Activated CD4-positive, alpha-beta memory T cell treated with anti-CD3 and anti-CD28 coated beads for 36 hours (primary cell): ENCODE measurements at regions of chr11 and their contacts with region 1.

Region 1: GRCh38 chr11:25876456-25876965 is 455.4 kb upstream of the ANO3 start:
- DNase-seq: no peak
- H3K4me3 Mint-ChIP-seq: no peak overlapping the region
- H3K27ac Mint-ChIP-seq: no peak overlapping the region
- H3K4me1 Mint-ChIP-seq: no peaks in the 10 kb centered on the region
- H3K27me3 Mint-ChIP-seq: no peaks in the 10 kb centered on the region

Region 2: DNA sequence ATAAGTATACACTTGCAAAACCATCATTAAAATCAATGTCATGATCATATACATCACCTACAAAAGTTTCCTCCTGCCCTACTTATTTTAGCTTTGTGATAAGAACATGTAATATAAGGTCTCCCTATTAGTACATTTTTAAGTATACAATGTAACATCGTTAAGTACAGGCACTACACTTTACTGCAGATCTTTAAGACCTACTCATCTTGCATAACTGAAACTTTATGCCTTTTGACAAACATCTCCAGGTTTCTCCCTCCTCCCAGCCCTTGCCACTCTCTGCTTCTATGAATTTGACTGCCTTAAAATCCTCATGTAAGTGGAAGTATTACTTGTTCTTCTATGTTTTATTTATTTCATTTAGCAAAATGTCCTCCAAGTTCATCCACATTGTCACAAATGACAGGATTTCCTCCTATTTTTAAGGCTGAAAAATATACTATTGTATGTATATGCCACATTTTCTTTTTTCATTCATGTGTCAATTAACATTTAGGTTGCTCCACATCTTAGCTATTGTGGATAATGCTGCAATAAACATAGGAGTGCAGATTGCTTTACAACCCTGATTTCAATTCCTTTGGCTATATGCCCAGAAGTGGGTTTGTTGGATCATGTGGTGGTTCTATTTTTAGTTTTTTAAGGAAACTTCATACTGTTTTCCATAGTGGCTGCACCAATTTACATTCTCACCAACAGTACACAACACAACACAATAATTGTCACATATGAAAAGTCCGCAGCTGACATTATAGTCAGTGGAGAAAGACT is 15.6 kb before region 1 on chr11:
- CTCF ChIA-PET with region 1: no interaction called
- POLR2A ChIA-PET with region 1: no interaction called
- intact Hi-C with region 1: no loop called
- DNase-seq: no peak
- H3K4me3 Mint-ChIP-seq: no peak overlapping the region
- H3K27ac Mint-ChIP-seq: no peak overlapping the region
- H3K4me1 Mint-ChIP-seq: no peaks in the 10 kb centered on the region
- H3K27me3 Mint-ChIP-seq: no peaks in the 10 kb centered on the region

Region 3: GRCh38 chr11:25938952-25939351 is 62.4 kb after region 1 on chr11:
- CTCF ChIA-PET with region 1: no interaction called
- POLR2A ChIA-PET with region 1: no interaction called
- intact Hi-C with region 1: loop called (anchors 10 kb)
- DNase-seq: no peak
- H3K4me3 Mint-ChIP-seq: no peak overlapping the region
- H3K27ac Mint-ChIP-seq: no peak overlapping the region
- H3K4me1 Mint-ChIP-seq: no peaks in the 10 kb centered on the region
- H3K27me3 Mint-ChIP-seq: no peaks in the 10 kb centered on the region